Aorta (tissue), 5 donors: ENCODE measurements at regions of chr5 and their contacts with region 1.

Region 1: DNA sequence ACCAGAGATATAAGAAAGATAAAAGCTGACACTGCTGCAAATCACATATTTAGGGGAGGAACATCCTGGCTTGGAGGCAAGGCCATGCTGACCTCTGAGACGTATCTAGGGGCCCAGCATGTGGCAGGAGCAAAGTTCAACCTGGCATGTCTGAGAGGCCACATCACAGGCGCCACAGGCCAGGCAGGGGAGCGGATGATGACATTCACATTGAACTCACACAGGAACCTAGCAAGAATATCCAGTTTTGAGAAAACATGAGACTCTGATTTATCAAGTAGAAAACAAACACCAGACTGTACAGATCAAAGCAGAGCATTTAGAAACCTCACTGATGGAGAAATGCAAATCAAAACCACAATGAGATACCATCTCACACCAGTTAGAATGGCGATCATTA is 64.2 kb upstream of the STK32A start:
- DNase-seq: no peak
- ATAC-seq: no peak
- H3K4me3 ChIP-seq: no peak overlapping the region
- H3K27ac ChIP-seq: no peak overlapping the region
- H3K4me1 ChIP-seq: no peaks in the 10 kb centered on the region
- H3K27me3 ChIP-seq: no peaks in the 10 kb centered on the region

Region 2: DNA sequence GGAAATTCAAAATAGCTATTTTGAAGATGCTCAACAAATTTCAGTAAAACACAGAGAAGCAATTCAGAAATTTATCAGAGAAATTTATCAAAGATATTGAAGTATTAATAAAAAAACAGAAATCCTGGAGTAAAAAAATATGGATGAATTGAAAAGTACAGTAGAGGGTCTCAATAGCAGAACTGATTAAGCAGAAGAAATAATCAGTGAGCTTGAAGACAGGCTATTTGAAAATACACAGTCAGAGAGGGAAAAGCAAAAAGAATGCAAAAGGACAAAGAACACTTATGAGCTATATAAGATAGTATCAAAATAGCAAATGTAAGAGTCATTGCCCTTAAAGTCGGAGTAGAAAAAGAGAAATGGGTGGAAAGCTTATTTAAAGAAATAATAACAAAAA is 184.1 kb before region 1 on chr5:
- intact Hi-C with region 1: loop called in 1 of 2 experiments (anchors 10 kb)
- DNase-seq: no peak
- ATAC-seq: no peak
- H3K4me3 ChIP-seq: no peak overlapping the region
- H3K27ac ChIP-seq: no peak overlapping the region
- H3K4me1 ChIP-seq: no peaks in the 10 kb centered on the region
- H3K27me3 ChIP-seq: no peaks in the 10 kb centered on the region

Region 3: DNA sequence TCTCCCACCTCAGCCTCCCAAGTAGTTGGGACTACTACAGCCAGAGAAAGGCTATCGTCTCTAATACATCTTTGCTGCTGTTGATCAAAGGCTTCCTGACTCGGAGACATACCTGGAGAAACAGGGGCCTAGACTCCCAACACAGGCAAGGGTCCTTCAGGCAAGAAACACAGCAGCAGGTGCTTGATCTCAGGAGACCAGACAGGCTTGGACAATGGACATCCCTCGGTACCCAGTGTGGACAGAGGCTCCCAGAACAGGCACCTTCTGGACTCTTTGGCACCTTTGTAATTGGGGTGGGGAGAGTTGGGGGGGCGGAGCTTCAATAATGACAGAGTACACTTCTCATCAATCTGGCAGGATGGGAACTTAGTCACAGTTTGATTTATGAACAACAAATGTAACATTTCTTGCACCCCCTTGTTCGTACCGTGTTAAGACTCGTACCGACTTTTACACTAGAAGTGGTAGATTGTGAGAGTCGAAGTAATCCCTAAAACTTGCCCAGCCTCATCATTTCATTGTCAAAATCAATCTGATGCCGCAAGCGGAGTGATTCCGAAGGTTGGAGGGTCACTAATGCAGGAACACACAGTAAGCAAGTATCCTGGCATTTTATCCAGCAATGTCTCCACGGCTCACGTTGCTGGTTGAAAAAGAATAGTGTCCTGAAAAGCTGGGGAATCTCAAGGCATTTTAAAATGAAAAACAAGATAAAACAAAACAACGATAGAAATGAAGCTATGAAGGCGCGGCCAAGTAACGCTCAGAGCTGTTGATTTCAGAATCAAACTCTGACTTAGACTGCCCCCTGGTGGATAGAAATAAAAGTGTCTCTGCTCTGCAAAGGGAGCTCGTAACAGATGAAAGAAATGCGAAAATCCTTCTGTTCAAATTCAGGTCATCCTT is 17.9 kb after region 1 on chr5:
- intact Hi-C with region 1: no loop called
- DNase-seq: no peak
- ATAC-seq: peak; percentile 88
- H3K4me3 ChIP-seq: no peak overlapping the region
- H3K27ac ChIP-seq: no peak overlapping the region
- H3K4me1 ChIP-seq: no peaks in the 10 kb centered on the region
- H3K27me3 ChIP-seq: no peaks in the 10 kb centered on the region